Heart left ventricle (tissue), 16 donors: ENCODE measurements at regions of chr2 and their contacts with region 1.

Region 1: DNA sequence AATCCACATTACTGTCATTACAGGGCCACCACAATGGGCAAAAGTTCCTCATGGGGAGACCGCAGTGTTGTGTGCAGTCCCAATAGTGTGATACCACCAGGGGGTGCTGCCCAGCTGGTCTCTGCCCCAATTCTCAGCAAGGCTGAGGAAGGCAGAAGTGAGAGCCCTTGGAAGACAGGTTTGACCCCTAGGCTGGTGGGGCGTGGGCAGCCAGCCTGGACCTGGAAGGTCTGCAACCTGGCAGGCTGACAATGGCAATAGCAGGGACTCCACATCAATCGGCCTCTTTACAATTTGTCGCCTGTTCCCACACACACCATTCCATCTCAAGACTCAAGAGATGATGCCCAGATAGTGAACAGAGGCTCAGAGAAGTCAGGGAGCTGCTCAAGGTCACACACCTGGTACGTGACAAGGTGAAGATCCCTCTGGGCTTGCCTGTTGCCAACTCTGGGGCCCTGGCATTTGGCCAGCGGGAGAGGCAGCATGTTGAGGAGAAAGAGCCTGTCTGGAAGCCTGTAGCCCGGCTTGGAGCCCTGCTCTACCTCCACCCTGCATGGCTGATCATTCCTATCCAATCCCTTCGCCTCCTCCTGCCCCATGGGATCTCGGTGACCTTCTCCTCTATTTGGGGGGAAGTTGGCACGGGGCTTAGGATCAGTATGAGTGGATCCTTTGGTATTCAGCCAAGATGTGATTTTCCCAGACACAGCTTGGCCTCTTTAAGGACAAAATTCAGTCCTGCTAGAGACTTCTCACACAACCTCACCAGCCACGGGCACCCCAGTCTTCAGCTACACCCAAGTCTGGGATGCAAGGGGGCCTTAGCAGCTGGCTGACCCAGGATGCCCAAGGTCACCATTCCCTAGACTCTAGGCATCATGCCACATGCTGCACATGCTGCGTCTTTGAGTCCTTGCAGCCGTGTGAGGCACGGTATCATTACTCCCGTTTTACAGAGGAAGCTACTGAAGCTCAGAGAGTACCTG is 2.9 kb upstream of the ATOH8 start:
- DNase-seq: peak; percentile 75 to 84 (median 81)
- ATAC-seq: peak; percentile 57 to 71 (median 62)
- H3K4me3 ChIP-seq: peak overlapping the region in 1 of 12 donors; percentile 10
- H3K27ac ChIP-seq: peak overlapping the region in 10 of 12 donors; percentile 2 to 96 (median 28)
- H3K4me1 ChIP-seq: peaks cover 15 to 79% (median 63%) of the 10 kb centered on the region in 12 donors
- H3K27me3 ChIP-seq: peaks cover 0 to 37% (median 0%) of the 10 kb centered on the region in 9 donors
- CTCF ChIP-seq: peak; percentile 76 to 87 (median 82)
- POLR2A ChIP-seq: no peak

Region 2: DNA sequence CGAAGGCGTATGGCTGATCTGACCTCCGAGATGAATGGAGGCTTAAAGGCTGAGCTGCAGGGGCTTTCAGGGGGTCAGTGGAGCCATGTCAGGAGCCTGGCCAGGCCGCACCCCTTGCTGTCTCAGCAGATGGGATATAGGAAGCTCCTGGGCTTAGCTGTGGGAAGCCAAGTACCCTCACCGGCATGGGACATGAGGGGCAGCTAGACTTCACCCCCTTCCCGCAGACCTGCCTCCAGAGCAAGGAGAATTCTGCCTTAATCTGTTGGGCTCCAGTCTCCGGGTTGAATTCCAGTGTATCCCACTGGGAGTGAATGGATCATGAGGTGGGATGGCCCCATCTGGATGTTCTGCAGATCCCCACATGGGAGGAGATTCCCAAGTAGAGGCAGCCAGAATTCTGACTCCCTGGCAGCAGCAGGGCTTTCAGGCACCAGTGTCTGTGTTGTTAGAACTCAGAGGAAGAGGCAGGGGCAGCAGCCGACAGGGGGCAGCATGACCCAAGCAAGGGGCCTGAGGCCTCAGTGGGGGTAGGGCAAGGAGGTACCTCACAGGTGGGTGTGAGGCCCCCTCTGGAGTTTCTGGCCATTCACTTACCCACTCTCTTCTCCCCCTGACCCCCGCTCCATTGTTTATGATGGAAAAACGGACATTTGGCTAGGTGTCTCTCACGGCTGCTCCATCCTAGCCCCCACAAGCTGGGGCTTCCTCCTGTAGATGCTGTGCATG is 359.8 kb before region 1 on chr2:
- intact Hi-C with region 1: no loop called
- DNase-seq: peak; percentile 29 to 80 (median 50)
- ATAC-seq: peak in 3 of 4 donors; percentile 50 to 59 (median 57)
- H3K4me3 ChIP-seq: no peak overlapping the region
- H3K27ac ChIP-seq: no peak overlapping the region
- H3K4me1 ChIP-seq: no peaks in the 10 kb centered on the region
- H3K27me3 ChIP-seq: no peaks in the 10 kb centered on the region
- CTCF ChIP-seq: peak; percentile 22 to 66 (median 49)
- POLR2A ChIP-seq: no peak

Region 3: GRCh38 chr2:85728883-85729824 is 21.7 kb before region 1 on chr2:
- intact Hi-C with region 1: loop called in 3 of 10 experiments (anchors 1 to 2 kb)
- DNase-seq: peak; percentile 89 to 95 (median 90)
- ATAC-seq: peak; percentile 89 to 95 (median 94)
- H3K4me3 ChIP-seq: no peak overlapping the region
- H3K27ac ChIP-seq: peak overlapping the region in 9 of 12 donors; percentile 15 to 71 (median 52)
- H3K4me1 ChIP-seq: peaks cover 0 to 47% (median 32%) of the 10 kb centered on the region in 12 donors
- H3K27me3 ChIP-seq: no peaks in the 10 kb centered on the region
- CTCF ChIP-seq: peak; percentile 90 to 99 (median 98)
- POLR2A ChIP-seq: no peak

Region 4: GRCh38 chr2:85772019-85772745 is 21.3 kb after region 1 on chr2:
- intact Hi-C with region 1: loop called in 4 of 10 experiments (anchors 2 kb)
- DNase-seq: peak; percentile 98 to 99 (median 99)
- ATAC-seq: peak; percentile 92
- H3K4me3 ChIP-seq: peak overlapping the region in 10 of 12 donors; percentile 3 to 41 (median 28)
- H3K27ac ChIP-seq: peak overlapping the region; percentile 73 to 95 (median 91)
- H3K4me1 ChIP-seq: peaks cover 59 to 96% (median 90%) of the 10 kb centered on the region in 12 donors
- H3K27me3 ChIP-seq: no peaks in the 10 kb centered on the region
- CTCF ChIP-seq: peak in 8 of 12 donors; percentile 18 to 48 (median 24)
- POLR2A ChIP-seq: peak in 1 of 2 donors; percentile 45

Region 5: GRCh38 chr2:85777441-85777861 is 26.6 kb after region 1 on chr2:
- intact Hi-C with region 1: loop called in 3 of 10 experiments (anchors 2 kb)
- DNase-seq: peak in 4 of 5 donors; percentile 58 to 71 (median 67)
- ATAC-seq: peak; percentile 12 to 44 (median 16)
- H3K4me3 ChIP-seq: no peak overlapping the region
- H3K27ac ChIP-seq: peak overlapping the region; percentile 46 to 95 (median 90)
- H3K4me1 ChIP-seq: peaks cover 36 to 88% (median 70%) of the 10 kb centered on the region in 12 donors
- H3K27me3 ChIP-seq: no peaks in the 10 kb centered on the region
- CTCF ChIP-seq: no peak
- POLR2A ChIP-seq: no peak

Region 6: DNA sequence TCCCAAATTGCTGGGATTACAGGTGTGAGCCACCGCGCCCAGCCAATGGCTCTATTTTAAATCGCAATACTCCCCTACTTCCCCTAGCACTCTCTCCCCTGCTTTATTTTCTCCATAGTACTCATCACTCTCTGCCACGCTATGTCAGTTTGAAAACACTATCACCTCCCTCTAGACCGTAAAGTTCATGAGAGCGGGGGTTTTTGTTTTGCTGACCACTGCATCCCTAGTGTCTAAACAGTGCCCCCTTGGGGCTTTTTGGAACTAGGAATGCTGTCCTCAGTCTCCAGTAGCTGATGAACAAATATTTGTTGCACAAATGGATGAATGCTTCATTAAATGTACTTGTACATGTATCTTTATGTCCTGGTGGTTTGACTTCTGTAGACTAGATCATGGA is 47.0 kb after region 1 on chr2:
- intact Hi-C with region 1: loop called (anchors 1 to 5 kb)
- DNase-seq: peak in 2 of 5 donors; percentile 21 to 46
- ATAC-seq: peak in 3 of 4 donors; percentile 34 to 60 (median 49)
- H3K4me3 ChIP-seq: no peak overlapping the region
- H3K27ac ChIP-seq: peak overlapping the region in 2 of 12 donors; percentile 55 to 80
- H3K4me1 ChIP-seq: peaks cover 12 to 67% (median 49%) of the 10 kb centered on the region in 12 donors
- H3K27me3 ChIP-seq: no peaks in the 10 kb centered on the region
- CTCF ChIP-seq: peak; percentile 40 to 74 (median 60)
- POLR2A ChIP-seq: no peak

Region 7: GRCh38 chr2:85804583-85804982 is 53.7 kb after region 1 on chr2:
- intact Hi-C with region 1: loop called in 8 of 10 experiments (anchors 2 to 5 kb)
- DNase-seq: no peak
- ATAC-seq: peak in 1 of 4 donors; percentile 12
- H3K4me3 ChIP-seq: no peak overlapping the region
- H3K27ac ChIP-seq: no peak overlapping the region
- H3K4me1 ChIP-seq: peaks cover 0 to 9% (median 0%) of the 10 kb centered on the region in 12 donors
- H3K27me3 ChIP-seq: no peaks in the 10 kb centered on the region
- CTCF ChIP-seq: peak; percentile 46 to 69 (median 64)
- POLR2A ChIP-seq: no peak